Mammary epithelial cell (primary cell): ENCODE measurements at regions of chr10 and their contacts with region 1.

Region 1: DNA sequence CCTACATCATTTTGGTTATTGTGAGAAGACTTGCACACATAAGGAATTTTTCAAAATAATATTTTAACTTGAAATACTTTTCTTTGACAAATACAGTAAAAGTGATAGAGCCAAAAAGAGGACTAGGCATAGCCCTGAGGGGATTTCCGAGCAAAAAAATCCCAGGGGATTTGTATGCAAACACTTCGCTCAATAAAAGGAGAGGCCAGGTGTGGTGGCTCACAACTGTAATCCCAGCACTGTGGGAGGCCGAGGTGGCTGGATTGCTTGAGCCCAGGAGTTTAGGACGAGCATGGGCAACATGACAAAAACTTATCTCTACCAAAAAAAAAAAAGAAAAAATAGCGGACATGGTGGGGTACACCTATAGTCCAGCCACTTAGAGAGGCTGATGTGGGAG is 193.0 kb downstream of the PCDH15 start:
- DNase-seq: no peak
- H3K4me3 ChIP-seq: no peak overlapping the region
- H3K27ac ChIP-seq: no peak overlapping the region
- H3K4me1 ChIP-seq: no peaks in the 10 kb centered on the region
- H3K27me3 ChIP-seq: no peaks in the 10 kb centered on the region
- CTCF ChIP-seq: no peak

Region 2: DNA sequence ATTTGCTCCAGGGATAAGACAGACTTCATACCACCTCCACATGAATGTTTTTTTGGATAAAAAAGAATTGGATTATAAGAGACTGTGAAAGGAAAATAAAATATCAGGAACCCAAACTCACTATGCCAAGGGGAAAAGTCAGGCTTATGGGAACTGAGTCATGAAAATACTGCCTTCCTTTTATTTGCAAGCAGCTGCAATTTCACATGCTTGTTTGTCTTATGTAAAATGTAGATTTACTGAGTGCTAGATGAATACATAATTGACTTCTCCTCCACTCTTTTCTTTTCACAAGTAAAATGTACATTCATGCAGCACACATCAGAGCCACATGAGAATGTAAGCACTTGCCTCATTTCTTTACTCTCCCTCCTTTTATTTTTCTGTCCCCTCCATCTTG is 894.6 kb before region 1 on chr10:
- CTCF ChIA-PET with region 1: no interaction called
- dilution Hi-C with region 1: no loop called
- in situ Hi-C with region 1: no loop called
- intact Hi-C with region 1: loop called (anchors 5 kb)
- DNase-seq: no peak
- H3K4me3 ChIP-seq: no peak overlapping the region
- H3K27ac ChIP-seq: no peak overlapping the region
- H3K4me1 ChIP-seq: no peaks in the 10 kb centered on the region
- H3K27me3 ChIP-seq: peaks cover 2% of the 10 kb centered on the region
- CTCF ChIP-seq: no peak